GM12878 (cell line): ENCODE measurements at regions of chr7 and their contacts with region 1.

Region 1: DNA sequence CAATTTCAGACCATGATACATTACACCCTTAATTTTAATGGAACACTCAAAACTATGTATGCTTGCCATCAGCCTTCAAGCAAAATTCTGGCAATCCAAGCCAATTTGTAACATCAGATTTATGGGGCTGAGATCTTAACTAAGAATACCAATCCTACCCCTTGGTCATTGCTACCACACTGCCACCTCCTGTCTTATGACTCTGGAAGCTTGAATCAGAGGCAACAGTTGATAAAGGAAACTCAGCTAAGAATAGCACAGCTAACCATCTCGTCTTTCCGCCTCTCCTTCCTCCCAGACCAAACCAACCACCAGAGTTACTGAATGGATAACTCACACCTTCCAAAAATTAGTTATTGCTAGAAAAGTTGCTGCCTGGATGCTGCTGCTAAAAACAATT is 7.4 kb downstream of the IGF2BP3 start:
- DNase-seq: no peak
- ATAC-seq: peak; percentile 20
- H3K4me3 ChIP-seq: peak overlapping the region; percentile 39
- H3K27ac ChIP-seq: peak overlapping the region; percentile 57
- H3K4me1 ChIP-seq: peaks cover 10% of the 10 kb centered on the region
- H3K27me3 ChIP-seq: no peaks in the 10 kb centered on the region
- CTCF ChIP-seq: peak in 1 of 3 experiments; percentile 62; a peak in 3 of 6 replicates
- EP300 ChIP-seq: no peak
- POLR2A ChIP-seq: no peak
- RAD21 ChIP-seq: peak; percentile 66

Region 2: DNA sequence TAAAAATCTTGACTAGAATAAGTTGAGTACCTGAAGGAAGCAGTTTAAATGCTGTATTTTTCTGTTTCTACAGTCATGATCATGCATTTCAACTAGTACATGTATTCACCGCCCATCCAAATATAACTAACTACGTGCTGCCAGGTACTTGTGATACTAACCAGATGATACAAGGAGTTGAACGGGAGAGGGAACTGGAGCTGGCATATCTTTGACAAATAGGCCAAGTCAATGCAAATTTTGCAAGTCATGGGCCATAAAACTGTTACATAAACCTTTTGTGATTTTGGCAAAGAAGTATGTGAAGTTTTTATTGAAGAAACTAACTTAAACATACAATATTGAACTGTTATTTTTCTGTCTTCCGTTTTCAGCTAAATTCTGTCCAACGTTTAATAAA is 266.5 kb before region 1 on chr7:
- CTCF ChIA-PET with region 1: no interaction called
- POLR2A ChIA-PET with region 1: no interaction called
- RAD21 ChIA-PET with region 1: no interaction called
- SMC1A ChIA-PET with region 1: no interaction called
- in situ Hi-C with region 1: no loop called
- intact Hi-C with region 1: no loop called
- DNase-seq: no peak
- ATAC-seq: no peak
- H3K4me3 ChIP-seq: no peak overlapping the region
- H3K27ac ChIP-seq: no peak overlapping the region
- H3K4me1 ChIP-seq: no peaks in the 10 kb centered on the region
- H3K27me3 ChIP-seq: no peaks in the 10 kb centered on the region
- CTCF ChIP-seq: no peak
- EP300 ChIP-seq: no peak
- POLR2A ChIP-seq: no peak
- RAD21 ChIP-seq: no peak

Region 3: DNA sequence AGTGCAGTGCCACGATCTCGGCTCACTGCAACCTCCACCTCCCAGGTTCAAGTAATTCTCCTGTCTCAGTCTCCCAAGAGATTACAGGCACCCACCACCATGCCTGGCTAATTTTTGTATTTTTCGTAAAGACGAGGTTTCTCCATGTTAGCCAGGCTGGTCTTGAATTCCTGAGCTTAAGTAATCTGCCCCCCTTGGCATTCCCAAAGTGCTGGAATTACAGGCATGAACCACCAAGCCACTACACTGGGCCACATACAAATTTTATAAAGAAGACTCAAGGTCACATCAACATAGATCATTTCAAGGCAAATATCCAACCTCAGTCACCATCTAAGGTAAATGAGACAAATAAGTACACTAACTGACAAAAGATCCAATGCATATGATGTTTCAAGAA is 24.7 kb before region 1 on chr7:
- CTCF ChIA-PET with region 1: interaction called, 11 read pairs
- POLR2A ChIA-PET with region 1: interaction called, 7 read pairs
- RAD21 ChIA-PET with region 1: interaction called, 3 read pairs
- SMC1A ChIA-PET with region 1: interaction called, 7 read pairs
- in situ Hi-C with region 1: no loop called
- intact Hi-C with region 1: no loop called
- DNase-seq: no peak
- ATAC-seq: no peak
- H3K4me3 ChIP-seq: no peak overlapping the region
- H3K27ac ChIP-seq: no peak overlapping the region
- H3K4me1 ChIP-seq: peaks cover 3% of the 10 kb centered on the region
- H3K27me3 ChIP-seq: no peaks in the 10 kb centered on the region
- CTCF ChIP-seq: no peak
- EP300 ChIP-seq: no peak
- POLR2A ChIP-seq: no peak
- RAD21 ChIP-seq: no peak

Region 4: GRCh38 chr7:23445326-23445725 is 17.5 kb before region 1 on chr7:
- CTCF ChIA-PET with region 1: interaction called, 11 read pairs
- POLR2A ChIA-PET with region 1: interaction called, 10 read pairs
- RAD21 ChIA-PET with region 1: interaction called, 6 read pairs
- SMC1A ChIA-PET with region 1: interaction called, 9 read pairs
- in situ Hi-C with region 1: no loop called
- intact Hi-C with region 1: no loop called
- DNase-seq: no peak
- ATAC-seq: peak; percentile 74
- H3K4me3 ChIP-seq: no peak overlapping the region
- H3K27ac ChIP-seq: no peak overlapping the region; the same call in 1 of the 2 replicates
- H3K4me1 ChIP-seq: peaks cover 17% of the 10 kb centered on the region
- H3K27me3 ChIP-seq: no peaks in the 10 kb centered on the region
- CTCF ChIP-seq: no peak
- EP300 ChIP-seq: peak in 1 of 2 experiments; percentile 70; a peak in 1 of 4 replicates
- POLR2A ChIP-seq: no peak
- RAD21 ChIP-seq: no peak

Region 5: DNA sequence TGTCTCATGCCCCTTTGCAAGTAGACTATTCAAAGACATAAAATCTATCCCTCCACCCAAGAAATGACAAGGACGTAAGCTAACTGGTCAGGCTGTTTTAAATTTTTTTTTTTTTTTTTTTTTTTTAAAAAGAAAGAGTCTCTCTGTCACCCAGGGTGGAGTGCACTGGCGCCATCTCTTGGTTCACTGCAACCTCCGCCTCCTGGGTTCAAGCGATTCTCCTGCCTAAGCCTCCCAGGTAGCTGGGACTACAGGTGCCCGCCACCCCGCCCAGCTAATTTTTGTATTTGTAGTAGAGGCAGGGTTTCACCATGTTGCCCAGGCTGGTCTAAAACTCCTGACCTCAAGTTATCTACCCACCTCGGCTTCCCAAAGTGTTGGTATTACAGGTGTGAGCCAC is 57.7 kb after region 1 on chr7:
- CTCF ChIA-PET with region 1: interaction called, 5 read pairs
- POLR2A ChIA-PET with region 1: interaction called, 4 read pairs
- RAD21 ChIA-PET with region 1: interaction called, 5 read pairs
- SMC1A ChIA-PET with region 1: interaction called, 10 read pairs
- in situ Hi-C with region 1: no loop called
- intact Hi-C with region 1: no loop called
- DNase-seq: no peak
- ATAC-seq: no peak
- H3K4me3 ChIP-seq: no peak overlapping the region
- H3K27ac ChIP-seq: no peak overlapping the region
- H3K4me1 ChIP-seq: peaks cover 5% of the 10 kb centered on the region
- H3K27me3 ChIP-seq: no peaks in the 10 kb centered on the region
- CTCF ChIP-seq: no peak
- EP300 ChIP-seq: no peak
- POLR2A ChIP-seq: no peak
- RAD21 ChIP-seq: 0 out of 2 replicates have a peak, but pooled peaks have one; percentile 12